Activated B cell treated with CpG ODN at 0.5 μM for 24 hours (primary cell): ENCODE measurements at regions of chr11 and their contacts with region 1.

Region 1: DNA sequence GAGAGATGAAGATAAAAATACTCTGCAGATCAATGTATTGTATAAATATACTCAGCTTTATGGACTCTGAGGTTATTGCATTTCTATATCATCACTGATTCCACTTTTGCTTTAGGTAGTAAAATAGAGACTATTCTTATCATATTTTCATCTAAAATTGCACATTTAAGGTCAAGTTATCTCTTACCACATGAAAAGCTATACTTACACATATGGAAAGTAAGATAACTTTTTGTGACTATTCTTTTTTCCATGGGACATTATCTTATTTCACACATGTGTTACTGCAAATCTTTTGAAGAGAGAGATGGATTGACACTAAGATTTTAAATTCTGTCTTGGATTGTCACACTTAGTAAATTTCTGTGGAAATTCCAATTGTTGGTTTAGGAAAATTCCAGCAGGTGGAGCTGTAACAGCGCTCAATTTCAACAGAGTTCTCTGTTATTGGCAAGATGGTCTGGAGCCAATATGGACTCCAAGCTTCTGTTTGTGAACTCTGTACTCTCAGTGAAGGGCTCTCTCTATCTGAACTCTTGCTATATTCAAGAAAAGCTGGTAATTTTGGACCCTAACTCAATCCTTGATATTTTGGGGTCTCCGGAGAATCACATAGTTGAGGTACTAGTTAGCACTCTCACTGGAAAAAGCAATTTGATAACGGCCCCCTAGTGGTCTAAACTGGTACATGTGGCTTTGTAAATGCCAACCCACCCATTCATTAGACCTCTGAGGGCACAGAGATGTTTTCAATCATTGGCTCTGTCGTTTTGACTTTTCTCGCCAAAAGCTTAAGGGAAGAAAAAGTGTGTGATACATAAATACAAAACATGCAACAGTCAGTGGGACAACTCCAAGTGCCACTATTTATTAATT is 429.7 kb downstream of the ETS1 start:
- DNase-seq: no peak
- ATAC-seq: peak; percentile 92
- H3K4me3 Mint-ChIP-seq: peak overlapping the region; percentile 82
- H3K27ac Mint-ChIP-seq: peak overlapping the region; percentile 50
- H3K4me1 Mint-ChIP-seq: no peaks in the 10 kb centered on the region
- H3K27me3 Mint-ChIP-seq: peaks cover 19% of the 10 kb centered on the region
- CTCF ChIP-seq: no peak

Region 2: GRCh38 chr11:128026596-128026995 is 131.1 kb before region 1 on chr11:
- CTCF ChIA-PET with region 1: interaction called, 12 read pairs
- POLR2A ChIA-PET with region 1: no interaction called
- intact Hi-C with region 1: loop called (anchors 1 kb)
- DNase-seq: no peak
- ATAC-seq: no peak
- H3K4me3 Mint-ChIP-seq: no peak overlapping the region
- H3K27ac Mint-ChIP-seq: no peak overlapping the region
- H3K4me1 Mint-ChIP-seq: no peaks in the 10 kb centered on the region
- H3K27me3 Mint-ChIP-seq: peaks cover 32% of the 10 kb centered on the region
- CTCF ChIP-seq: no peak

Region 3: DNA sequence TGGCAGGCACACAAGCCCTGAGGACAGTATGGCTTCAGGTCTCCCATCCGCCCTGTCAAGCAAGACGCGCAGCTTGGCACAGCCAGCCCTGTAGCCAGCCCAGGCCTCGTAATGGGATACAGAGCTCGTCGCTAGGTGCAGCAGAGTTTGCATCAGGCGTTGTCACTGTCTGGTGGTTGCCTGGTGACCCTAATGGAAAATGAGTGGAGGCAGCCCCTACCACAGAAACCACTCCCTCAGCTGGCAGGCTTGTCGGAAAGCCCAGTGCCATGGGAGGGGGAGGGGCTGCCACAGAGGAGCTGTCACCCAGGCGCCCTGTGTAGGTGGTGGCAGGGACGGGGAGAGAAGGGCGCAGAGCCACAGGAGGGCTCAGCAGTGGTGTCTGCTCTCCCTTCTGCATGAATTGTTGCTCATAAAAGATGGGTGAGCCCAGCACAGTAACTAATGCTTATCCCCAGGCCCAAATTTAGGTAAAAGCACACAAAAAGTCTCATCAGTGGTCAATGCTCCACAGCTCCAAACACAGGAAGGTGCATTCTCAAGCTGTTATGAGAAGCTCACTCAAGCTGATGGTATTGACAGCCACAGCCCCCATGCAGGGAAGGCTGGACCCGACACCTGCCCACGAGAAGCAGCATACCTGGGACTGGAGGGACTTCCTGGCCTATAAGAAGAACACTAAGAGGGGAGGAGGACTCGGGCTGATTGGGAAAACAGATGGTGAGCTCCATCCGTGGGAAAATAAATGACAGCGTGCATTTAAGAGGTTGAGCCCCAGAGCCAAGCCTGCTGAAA is 265.1 kb after region 1 on chr11:
- CTCF ChIA-PET with region 1: no interaction called
- POLR2A ChIA-PET with region 1: no interaction called
- intact Hi-C with region 1: no loop called
- DNase-seq: peak; percentile 42
- ATAC-seq: peak; percentile 88
- H3K4me3 Mint-ChIP-seq: peak overlapping the region; percentile 24
- H3K27ac Mint-ChIP-seq: peak overlapping the region; percentile 65
- H3K4me1 Mint-ChIP-seq: peaks cover 28% of the 10 kb centered on the region
- H3K27me3 Mint-ChIP-seq: no peaks in the 10 kb centered on the region
- CTCF ChIP-seq: no peak

Region 4: DNA sequence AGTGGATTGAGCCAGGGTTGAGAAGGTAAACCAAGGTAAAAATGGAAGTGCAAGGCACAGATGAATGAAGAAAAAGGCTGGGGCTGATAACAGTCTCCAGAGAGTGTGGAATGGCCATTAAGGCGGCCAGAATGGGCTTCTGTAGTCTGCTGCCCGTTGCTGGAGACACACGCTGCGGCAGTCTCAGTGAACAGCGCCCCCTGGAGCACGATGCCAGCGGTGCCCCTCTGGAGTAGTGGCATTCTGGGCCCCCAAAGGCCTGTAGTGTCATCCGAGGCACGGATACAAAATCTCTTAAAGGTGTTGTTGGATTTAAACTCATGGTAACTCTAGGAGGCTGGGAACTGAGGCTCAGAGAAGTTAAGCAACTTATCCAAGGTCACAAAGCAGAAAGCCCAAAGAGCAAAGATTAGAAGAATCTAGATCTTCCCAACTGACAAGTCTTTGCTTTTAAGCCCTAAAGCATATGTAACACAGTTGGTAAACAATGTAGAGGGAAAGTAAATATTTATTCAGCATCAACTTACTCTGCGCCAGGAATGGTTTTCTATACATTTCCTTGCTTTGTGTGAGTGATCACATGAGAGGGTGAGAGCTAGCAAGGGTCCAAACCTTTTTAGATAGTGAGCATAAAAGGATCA is 691.3 kb after region 1 on chr11:
- CTCF ChIA-PET with region 1: interaction called, 10 read pairs
- POLR2A ChIA-PET with region 1: no interaction called
- intact Hi-C with region 1: no loop called
- DNase-seq: peak; percentile 57
- ATAC-seq: peak; percentile 73
- H3K4me3 Mint-ChIP-seq: no peak overlapping the region
- H3K27ac Mint-ChIP-seq: peak overlapping the region; percentile 60
- H3K4me1 Mint-ChIP-seq: peaks cover 58% of the 10 kb centered on the region
- H3K27me3 Mint-ChIP-seq: no peaks in the 10 kb centered on the region
- CTCF ChIP-seq: peak; percentile 29

Region 5: DNA sequence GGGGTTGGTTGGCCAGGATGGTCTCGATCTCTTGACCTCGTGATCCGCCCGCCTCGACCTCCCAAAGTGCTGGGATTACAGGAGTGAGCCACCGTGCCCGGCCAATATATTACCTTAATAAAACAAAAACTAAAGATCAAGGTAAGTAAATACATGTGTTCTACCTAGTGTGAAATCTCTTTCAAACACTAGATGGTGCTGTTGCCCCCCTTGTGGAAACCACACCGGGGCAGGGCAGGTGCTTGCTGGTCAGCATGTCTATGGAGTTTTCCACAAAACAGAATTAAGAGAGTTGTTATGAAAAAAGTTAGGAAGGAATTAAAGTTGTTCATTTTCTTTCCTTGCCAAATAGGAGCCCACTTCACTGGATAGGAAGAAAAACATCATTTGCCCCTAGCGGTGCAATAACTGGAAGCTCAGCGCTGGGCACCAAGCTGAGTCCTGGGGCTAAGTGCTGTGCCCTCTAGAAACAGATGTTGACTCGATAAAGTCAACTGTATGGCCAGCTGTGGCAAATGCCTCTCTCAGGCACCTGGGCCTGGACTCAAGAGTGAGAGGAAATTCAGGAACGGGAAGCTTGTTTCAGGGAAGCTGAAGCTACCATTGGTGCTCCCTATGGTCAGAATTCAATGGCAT is 727.2 kb after region 1 on chr11:
- CTCF ChIA-PET with region 1: interaction called, 13 read pairs
- POLR2A ChIA-PET with region 1: no interaction called
- intact Hi-C with region 1: no loop called
- DNase-seq: no peak
- ATAC-seq: peak; percentile 84
- H3K4me3 Mint-ChIP-seq: no peak overlapping the region
- H3K27ac Mint-ChIP-seq: no peak overlapping the region
- H3K4me1 Mint-ChIP-seq: no peaks in the 10 kb centered on the region
- H3K27me3 Mint-ChIP-seq: peaks cover 70% of the 10 kb centered on the region
- CTCF ChIP-seq: peak; percentile 74

Region 6: DNA sequence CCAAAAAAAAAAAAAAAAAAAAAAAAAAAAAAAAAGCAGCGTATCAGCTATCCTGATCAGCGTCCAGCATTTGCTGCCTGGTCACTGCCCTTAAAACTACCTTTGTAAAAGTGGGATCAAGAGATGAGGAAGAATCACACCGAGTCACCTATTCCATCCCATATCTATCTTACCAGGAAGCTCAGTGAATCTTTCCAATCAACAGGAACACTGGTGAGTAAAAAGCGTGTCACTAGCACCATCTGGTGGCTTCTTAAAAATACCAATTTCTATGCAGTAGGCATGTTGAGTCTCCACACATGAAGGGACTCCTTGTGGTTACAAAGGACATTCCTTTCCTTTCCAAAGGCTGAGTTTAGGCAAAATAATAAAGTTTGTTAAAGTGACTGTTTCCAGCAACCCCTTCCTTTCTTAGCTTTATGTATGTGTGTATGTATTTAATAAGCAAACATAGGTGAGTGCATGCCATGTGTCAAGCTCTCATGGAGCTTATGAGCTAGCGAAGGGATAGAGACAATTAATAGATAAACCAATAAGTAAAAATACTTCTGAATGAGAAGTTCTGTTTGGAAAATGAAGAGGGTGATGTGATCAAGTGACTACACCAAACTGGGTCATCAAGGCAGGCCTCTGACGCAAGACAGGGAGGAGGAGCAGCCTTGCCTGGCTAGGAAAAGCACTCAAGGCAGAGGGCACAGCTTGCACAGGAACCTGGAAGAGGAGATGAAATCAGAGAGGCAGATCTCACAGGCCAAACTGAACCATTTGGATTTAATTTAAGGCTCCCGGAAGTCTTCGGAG is 798.9 kb after region 1 on chr11:
- CTCF ChIA-PET with region 1: interaction called, 49 read pairs
- POLR2A ChIA-PET with region 1: no interaction called
- intact Hi-C with region 1: loop called (anchors 1 kb)
- DNase-seq: no peak
- ATAC-seq: peak; percentile 49
- H3K4me3 Mint-ChIP-seq: no peak overlapping the region
- H3K27ac Mint-ChIP-seq: no peak overlapping the region
- H3K4me1 Mint-ChIP-seq: peaks cover 2% of the 10 kb centered on the region
- H3K27me3 Mint-ChIP-seq: peaks cover 14% of the 10 kb centered on the region
- CTCF ChIP-seq: peak; percentile 31